Endothelial cell of umbilical vein (primary cell): ENCODE measurements at regions of chr21 and their contacts with region 1.

Region 1: GRCh38 chr21:45140346-45140940 is 66.1 kb downstream of the ADARB1 start:
- DNase-seq: peak; percentile 88
- H3K4me3 ChIP-seq: no peak overlapping the region
- H3K27ac ChIP-seq: no peak overlapping the region
- H3K4me1 ChIP-seq: no peaks in the 10 kb centered on the region
- H3K27me3 ChIP-seq: no peaks in the 10 kb centered on the region
- CTCF ChIP-seq: peak; percentile 90 to 93
- POLR2A ChIP-seq: no peak

Region 2: GRCh38 chr21:44670642-44671432 is 469.6 kb before region 1 on chr21:
- CTCF ChIA-PET with region 1: no interaction called
- POLR2A ChIA-PET with region 1: no interaction called
- dilution Hi-C with region 1: no loop called
- intact Hi-C with region 1: no loop called
- DNase-seq: no peak
- H3K4me3 ChIP-seq: no peak overlapping the region
- H3K27ac ChIP-seq: no peak overlapping the region
- H3K4me1 ChIP-seq: no peaks in the 10 kb centered on the region
- H3K27me3 ChIP-seq: peaks cover 0 to 4% of the 10 kb centered on the region in 2 experiments
- CTCF ChIP-seq: no peak
- POLR2A ChIP-seq: no peak

Region 3: DNA sequence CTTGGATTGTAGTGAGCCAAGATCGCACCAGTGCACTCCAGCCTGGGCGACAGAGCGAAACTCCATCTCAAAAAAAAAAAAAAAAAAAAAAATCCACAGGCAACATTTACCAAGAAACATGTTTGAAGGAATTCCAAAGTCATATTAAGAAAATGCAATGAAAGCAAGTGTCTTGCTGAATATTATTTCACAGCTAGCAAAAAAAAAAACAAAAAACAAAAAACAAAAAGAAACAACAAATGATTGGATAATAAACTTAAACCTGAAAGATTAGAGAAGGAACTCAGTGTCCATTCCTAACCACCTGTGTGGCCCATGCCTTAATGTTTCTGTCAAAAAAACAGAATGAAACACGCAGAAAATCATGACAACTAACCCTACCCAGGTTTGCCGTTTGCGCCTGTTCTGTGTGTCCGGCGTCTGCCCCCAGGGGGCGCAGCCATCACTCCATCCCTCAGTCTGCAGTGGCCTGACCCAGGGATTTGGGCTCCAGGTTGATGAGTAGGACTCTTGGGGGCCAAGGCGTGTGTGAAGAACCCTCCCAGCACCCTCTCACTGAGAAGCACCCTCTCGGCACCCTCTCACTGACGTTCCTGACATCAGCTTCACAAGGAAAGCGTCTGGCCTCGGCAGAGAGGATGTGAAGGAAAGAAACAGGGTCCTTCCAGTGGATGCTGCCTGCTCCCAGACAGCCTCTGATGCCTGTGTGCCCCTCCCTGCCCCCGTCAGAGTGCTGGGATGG is 247.7 kb before region 1 on chr21:
- CTCF ChIA-PET with region 1: interaction called, 10 read pairs
- POLR2A ChIA-PET with region 1: no interaction called
- dilution Hi-C with region 1: no loop called
- intact Hi-C with region 1: no loop called
- DNase-seq: peak; percentile 54
- H3K4me3 ChIP-seq: no peak overlapping the region
- H3K27ac ChIP-seq: no peak overlapping the region
- H3K4me1 ChIP-seq: no peaks in the 10 kb centered on the region
- H3K27me3 ChIP-seq: no peaks in the 10 kb centered on the region
- CTCF ChIP-seq: peak; percentile 91 to 92
- POLR2A ChIP-seq: no peak

Region 4: DNA sequence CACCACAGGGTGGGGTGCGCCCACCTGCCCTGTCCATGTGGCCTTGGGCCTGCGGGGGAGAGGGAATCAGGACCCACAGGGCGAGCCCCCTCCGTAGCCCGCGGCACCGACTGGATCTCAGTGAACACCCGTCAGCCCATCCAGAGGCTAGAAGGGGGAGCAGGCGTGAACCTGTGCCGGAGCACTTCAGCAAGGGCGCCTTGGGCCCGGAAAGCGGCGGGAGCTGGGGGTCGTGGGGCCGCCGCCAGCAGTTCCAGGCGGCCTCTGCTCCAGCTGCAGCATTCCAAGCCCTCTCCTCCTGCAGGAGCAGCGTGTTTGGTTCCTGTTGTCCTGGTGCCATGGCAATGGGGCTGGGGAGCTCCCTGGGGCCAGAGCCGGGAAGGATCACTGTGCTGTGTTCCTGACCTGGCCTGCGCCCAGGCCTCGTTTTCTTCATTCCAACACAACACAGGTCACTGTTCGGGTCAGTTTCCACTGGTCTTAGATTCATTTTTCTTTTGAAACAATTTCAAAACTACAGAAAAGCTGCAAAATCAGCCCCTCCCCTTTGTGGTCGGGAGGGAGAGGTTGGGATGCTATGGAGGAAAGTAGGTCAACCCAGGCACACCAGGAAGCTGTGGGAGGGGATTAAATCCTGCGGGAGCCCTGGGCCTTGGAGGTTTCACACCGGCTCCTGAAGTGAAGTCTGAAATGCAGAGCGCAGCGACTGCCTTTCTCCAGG is 181.8 kb before region 1 on chr21:
- CTCF ChIA-PET with region 1: interaction called, 47 read pairs
- POLR2A ChIA-PET with region 1: no interaction called
- dilution Hi-C with region 1: no loop called
- intact Hi-C with region 1: no loop called
- DNase-seq: peak; percentile 95
- H3K4me3 ChIP-seq: no peak overlapping the region
- H3K27ac ChIP-seq: peak overlapping the region; percentile 61
- H3K4me1 ChIP-seq: peaks cover 40% of the 10 kb centered on the region
- H3K27me3 ChIP-seq: no peaks in the 10 kb centered on the region
- CTCF ChIP-seq: no peak
- POLR2A ChIP-seq: no peak

Region 5: DNA sequence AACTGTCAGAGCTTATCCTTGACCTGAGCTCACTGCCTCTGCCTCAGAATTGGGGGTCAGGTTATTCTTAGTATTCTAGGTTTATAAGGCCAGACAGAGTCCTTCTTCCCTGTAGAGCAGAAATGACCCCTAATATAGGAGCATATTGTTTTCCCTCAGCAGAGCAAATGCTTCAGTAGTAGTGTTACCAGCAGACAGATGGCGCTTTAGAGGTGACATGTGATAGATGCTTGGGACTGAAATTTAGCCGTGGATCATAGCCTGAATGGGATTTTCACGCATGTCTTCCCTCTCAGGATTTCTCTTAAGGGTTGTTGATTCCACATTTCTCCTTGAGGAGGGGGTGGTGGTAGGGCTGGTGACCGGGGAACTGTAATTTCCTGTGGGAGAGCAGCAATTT is 41.6 kb before region 1 on chr21:
- CTCF ChIA-PET with region 1: interaction called, 57 read pairs
- POLR2A ChIA-PET with region 1: no interaction called
- dilution Hi-C with region 1: no loop called
- intact Hi-C with region 1: no loop called
- DNase-seq: peak; percentile 46
- H3K4me3 ChIP-seq: no peak overlapping the region
- H3K27ac ChIP-seq: no peak overlapping the region
- H3K4me1 ChIP-seq: peaks cover 65% of the 10 kb centered on the region
- H3K27me3 ChIP-seq: no peaks in the 10 kb centered on the region
- CTCF ChIP-seq: peak; percentile 36 to 53
- POLR2A ChIP-seq: no peak

Region 6: GRCh38 chr21:45287438-45288391 is 147.3 kb after region 1 on chr21 and contains the start of gene POFUT2:
- CTCF ChIA-PET with region 1: interaction called, 137 read pairs
- POLR2A ChIA-PET with region 1: interaction called, 5 read pairs
- dilution Hi-C with region 1: no loop called
- intact Hi-C with region 1: loop called (anchors 5 kb)
- DNase-seq: peak; percentile 97
- H3K4me3 ChIP-seq: peak within 1 kb of the TSS; percentile 67 to 93 (median 79)
- H3K27ac ChIP-seq: peak within 1 kb of the TSS; percentile 56
- H3K4me1 ChIP-seq: peaks cover 20% of the 10 kb centered on the region
- H3K27me3 ChIP-seq: no peaks in the 10 kb centered on the region
- CTCF ChIP-seq: peak in 1 of 2 donors; percentile 2
- POLR2A ChIP-seq: peak; percentile 89
- total RNA-seq, gene POFUT2: 47.5 and 48.9 TPM in 2 replicates

Region 7: DNA sequence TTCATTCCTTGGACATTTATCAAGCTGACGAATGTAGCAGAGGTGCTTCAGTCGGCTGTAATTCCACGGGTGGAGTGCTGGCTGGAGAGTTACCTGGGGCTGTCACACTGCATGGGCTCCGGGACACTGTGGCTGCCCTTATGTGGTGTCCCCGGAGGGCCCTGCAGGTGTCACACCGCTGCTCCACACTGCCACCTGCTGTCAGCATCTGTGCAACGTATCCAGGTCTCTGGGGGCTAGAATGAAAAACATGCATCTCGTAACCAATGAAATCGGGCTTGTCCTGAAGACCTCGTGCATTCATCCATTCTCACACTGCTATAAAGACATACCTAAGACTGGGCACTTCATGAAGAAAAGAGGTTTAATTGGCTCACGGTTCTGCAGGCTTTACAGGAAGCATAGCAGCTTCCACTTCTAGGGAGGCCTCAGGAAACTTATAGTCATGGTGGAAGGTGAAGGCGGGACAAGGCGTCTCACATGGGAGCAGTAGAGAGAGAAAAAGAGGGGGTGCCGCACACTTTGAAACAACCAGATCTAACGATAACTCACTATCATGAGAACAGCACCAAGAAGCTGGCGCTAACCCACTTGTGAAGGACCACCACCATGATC is 456.4 kb after region 1 on chr21:
- CTCF ChIA-PET with region 1: interaction called, 21 read pairs
- POLR2A ChIA-PET with region 1: no interaction called
- dilution Hi-C with region 1: no loop called
- intact Hi-C with region 1: loop called (anchors 10 kb)
- DNase-seq: peak; percentile 60
- H3K4me3 ChIP-seq: no peak overlapping the region
- H3K27ac ChIP-seq: no peak overlapping the region
- H3K4me1 ChIP-seq: no peaks in the 10 kb centered on the region
- H3K27me3 ChIP-seq: no peaks in the 10 kb centered on the region
- CTCF ChIP-seq: peak; percentile 78 to 92
- POLR2A ChIP-seq: no peak

Region 8: GRCh38 chr21:45995686-45996179 is 855.3 kb after region 1 on chr21:
- CTCF ChIA-PET with region 1: no interaction called
- POLR2A ChIA-PET with region 1: no interaction called
- dilution Hi-C with region 1: no loop called
- intact Hi-C with region 1: no loop called
- DNase-seq: no peak
- H3K4me3 ChIP-seq: no peak overlapping the region
- H3K27ac ChIP-seq: no peak overlapping the region
- H3K4me1 ChIP-seq: no peaks in the 10 kb centered on the region
- H3K27me3 ChIP-seq: no peaks in the 10 kb centered on the region
- CTCF ChIP-seq: no peak
- POLR2A ChIP-seq: no peak